Endothelial cell of umbilical vein (primary cell): ENCODE measurements at regions of chr1 and their contacts with region 1.

Region 1: DNA sequence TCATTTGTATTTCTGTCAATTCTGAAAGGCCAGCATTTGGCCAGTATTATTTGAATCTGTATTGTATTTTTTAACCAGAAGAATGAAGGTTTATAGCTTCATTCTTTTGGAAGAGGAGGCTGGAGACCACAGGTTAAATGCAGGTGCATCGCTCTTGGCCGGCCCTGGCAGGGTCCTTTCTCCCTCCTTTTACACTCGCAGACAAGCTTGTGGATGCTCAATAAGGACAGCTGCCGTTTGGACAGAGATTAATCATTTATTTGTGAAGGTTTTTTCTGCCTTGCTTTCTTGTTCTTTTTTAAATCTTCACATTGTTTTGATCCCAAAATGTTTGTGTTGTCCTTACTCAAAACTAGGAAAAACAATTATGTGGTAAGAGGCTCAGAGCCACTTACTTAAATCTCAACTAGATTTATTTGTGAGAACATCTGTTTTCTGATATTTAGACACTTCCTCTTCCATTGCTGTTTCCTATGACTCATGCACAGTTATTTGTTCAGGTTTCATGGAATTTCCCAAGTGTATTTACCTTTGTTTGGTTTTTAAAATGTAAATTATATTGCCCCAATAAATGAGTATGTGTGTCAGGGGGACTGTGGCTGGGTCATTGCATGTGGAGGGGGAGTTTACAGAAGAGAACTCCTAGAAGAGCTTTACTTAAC is 46.7 kb upstream of the LAMC2 start:
- DNase-seq: peak; percentile 96
- H3K4me3 ChIP-seq: peak overlapping the region in 1 of 3 experiments; percentile 19
- H3K27ac ChIP-seq: peak overlapping the region; percentile 94
- H3K4me1 ChIP-seq: peaks cover 25% of the 10 kb centered on the region
- H3K27me3 ChIP-seq: no peaks in the 10 kb centered on the region
- CTCF ChIP-seq: no peak
- POLR2A ChIP-seq: peak; percentile 82

Region 2: GRCh38 chr1:183164350-183164749 is 24.9 kb after region 1 on chr1:
- CTCF ChIA-PET with region 1: no interaction called
- POLR2A ChIA-PET with region 1: no interaction called
- dilution Hi-C with region 1: no loop called
- intact Hi-C with region 1: loop called (anchors 1 kb)
- DNase-seq: peak; percentile 44
- H3K4me3 ChIP-seq: no peak overlapping the region
- H3K27ac ChIP-seq: peak overlapping the region; percentile 64
- H3K4me1 ChIP-seq: peaks cover 25% of the 10 kb centered on the region
- H3K27me3 ChIP-seq: no peaks in the 10 kb centered on the region
- CTCF ChIP-seq: no peak
- POLR2A ChIP-seq: no peak

Region 3: GRCh38 chr1:183180634-183181056 is 41.2 kb after region 1 on chr1:
- CTCF ChIA-PET with region 1: no interaction called
- POLR2A ChIA-PET with region 1: no interaction called
- dilution Hi-C with region 1: no loop called
- intact Hi-C with region 1: loop called (anchors 1 kb)
- DNase-seq: peak; percentile 86
- H3K4me3 ChIP-seq: no peak overlapping the region
- H3K27ac ChIP-seq: peak overlapping the region; percentile 90
- H3K4me1 ChIP-seq: peaks cover 16% of the 10 kb centered on the region
- H3K27me3 ChIP-seq: no peaks in the 10 kb centered on the region
- CTCF ChIP-seq: no peak
- POLR2A ChIP-seq: no peak

Region 4: DNA sequence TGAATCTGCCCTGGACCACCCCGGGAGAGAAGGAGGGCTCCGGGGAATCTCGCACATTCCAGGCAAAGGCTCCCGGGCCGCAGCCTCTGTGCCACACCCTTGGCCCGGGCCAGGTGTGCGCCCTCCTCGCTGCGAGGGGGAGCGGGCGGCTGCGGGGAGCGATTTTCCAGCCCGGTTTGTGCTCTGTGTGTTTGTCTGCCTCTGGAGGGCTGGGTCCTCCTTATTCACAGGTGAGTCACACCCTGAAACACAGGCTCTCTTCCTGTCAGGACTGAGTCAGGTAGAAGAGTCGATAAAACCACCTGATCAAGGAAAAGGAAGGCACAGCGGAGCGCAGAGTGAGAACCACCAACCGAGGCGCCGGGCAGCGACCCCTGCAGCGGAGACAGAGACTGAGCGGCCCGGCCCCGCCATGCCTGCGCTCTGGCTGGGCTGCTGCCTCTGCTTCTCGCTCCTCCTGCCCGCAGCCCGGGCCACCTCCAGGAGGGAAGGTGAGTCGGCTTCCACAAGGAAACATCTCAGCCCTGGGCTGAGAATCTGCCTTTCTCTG is 46.6 kb after region 1 on chr1 and contains the start of gene LAMC2:
- CTCF ChIA-PET with region 1: interaction called, 5 read pairs
- POLR2A ChIA-PET with region 1: no interaction called
- dilution Hi-C with region 1: no loop called
- intact Hi-C with region 1: loop called (anchors 1 kb)
- DNase-seq: peak; percentile 46
- H3K4me3 ChIP-seq: peak within 1 kb of the TSS in 2 of 3 experiments; percentile 13 to 41
- H3K27ac ChIP-seq: peak within 1 kb of the TSS; percentile 22
- H3K4me1 ChIP-seq: peaks cover 12% of the 10 kb centered on the region
- H3K27me3 ChIP-seq: no peaks in the 10 kb centered on the region
- CTCF ChIP-seq: peak; percentile 33 to 47
- POLR2A ChIP-seq: no peak
- total RNA-seq, gene LAMC2: 0.82 and 4.0 TPM in 2 replicates

Region 5: GRCh38 chr1:183227963-183228649 is 88.7 kb after region 1 on chr1:
- CTCF ChIA-PET with region 1: interaction called, 16 read pairs
- POLR2A ChIA-PET with region 1: no interaction called
- dilution Hi-C with region 1: no loop called
- intact Hi-C with region 1: no loop called
- DNase-seq: peak; percentile 54
- H3K4me3 ChIP-seq: no peak overlapping the region
- H3K27ac ChIP-seq: no peak overlapping the region
- H3K4me1 ChIP-seq: peaks cover 13% of the 10 kb centered on the region
- H3K27me3 ChIP-seq: no peaks in the 10 kb centered on the region
- CTCF ChIP-seq: peak; percentile 80 to 87
- POLR2A ChIP-seq: no peak

Region 6: DNA sequence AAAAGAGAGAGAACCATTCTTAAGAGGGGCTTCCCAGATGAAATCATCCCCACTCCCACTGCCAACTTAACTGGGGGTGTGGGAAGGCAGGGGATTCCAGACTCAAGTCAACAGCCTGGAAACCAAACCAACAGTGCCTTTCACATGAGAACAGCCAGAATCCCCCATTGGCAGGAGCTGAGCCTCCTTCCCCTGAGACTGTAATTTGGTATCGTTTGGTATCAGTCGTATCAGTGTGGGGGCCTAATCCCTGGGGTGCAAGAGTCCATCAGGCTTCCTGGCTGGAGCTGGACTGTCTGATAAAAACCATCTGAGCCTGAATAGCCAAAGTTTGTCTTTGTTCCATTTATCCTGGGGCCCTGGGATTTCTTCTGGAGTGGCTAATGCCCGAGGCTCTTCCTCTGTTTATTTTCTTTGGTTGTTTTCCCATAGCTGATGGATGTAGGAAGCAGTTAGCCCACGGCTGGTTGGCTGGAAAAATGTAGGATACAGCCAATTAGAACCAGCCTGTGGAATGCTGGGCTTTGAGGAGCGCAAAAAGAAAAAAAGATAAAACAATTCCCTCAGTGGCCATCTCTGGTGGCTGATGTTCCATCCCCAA is 131.2 kb after region 1 on chr1:
- CTCF ChIA-PET with region 1: no interaction called
- POLR2A ChIA-PET with region 1: no interaction called
- dilution Hi-C with region 1: no loop called
- intact Hi-C with region 1: loop called (anchors 5 kb)
- DNase-seq: peak; percentile 92
- H3K4me3 ChIP-seq: no peak overlapping the region
- H3K27ac ChIP-seq: peak overlapping the region; percentile 56
- H3K4me1 ChIP-seq: peaks cover 28% of the 10 kb centered on the region
- H3K27me3 ChIP-seq: no peaks in the 10 kb centered on the region
- CTCF ChIP-seq: no peak
- POLR2A ChIP-seq: no peak